MCF 10A (cell line): ENCODE measurements at regions of chr6 and their contacts with region 1.

Region 1: GRCh38 chr6:101393251-101393828 is at the start of gene GRIK2:
- DNase-seq: peak; percentile 59
- H3K4me3 Mint-ChIP-seq: peak within 1 kb of the TSS; percentile 82
- H3K27ac Mint-ChIP-seq: no peak within 1 kb of the TSS
- H3K4me1 Mint-ChIP-seq: peaks cover 13% of the 10 kb centered on the region
- H3K27me3 Mint-ChIP-seq: no peaks in the 10 kb centered on the region
- CTCF ChIP-seq: peak; percentile 49
- total RNA-seq, gene GRIK2: 0.89 and 2.5 TPM in 2 replicates

Region 2: DNA sequence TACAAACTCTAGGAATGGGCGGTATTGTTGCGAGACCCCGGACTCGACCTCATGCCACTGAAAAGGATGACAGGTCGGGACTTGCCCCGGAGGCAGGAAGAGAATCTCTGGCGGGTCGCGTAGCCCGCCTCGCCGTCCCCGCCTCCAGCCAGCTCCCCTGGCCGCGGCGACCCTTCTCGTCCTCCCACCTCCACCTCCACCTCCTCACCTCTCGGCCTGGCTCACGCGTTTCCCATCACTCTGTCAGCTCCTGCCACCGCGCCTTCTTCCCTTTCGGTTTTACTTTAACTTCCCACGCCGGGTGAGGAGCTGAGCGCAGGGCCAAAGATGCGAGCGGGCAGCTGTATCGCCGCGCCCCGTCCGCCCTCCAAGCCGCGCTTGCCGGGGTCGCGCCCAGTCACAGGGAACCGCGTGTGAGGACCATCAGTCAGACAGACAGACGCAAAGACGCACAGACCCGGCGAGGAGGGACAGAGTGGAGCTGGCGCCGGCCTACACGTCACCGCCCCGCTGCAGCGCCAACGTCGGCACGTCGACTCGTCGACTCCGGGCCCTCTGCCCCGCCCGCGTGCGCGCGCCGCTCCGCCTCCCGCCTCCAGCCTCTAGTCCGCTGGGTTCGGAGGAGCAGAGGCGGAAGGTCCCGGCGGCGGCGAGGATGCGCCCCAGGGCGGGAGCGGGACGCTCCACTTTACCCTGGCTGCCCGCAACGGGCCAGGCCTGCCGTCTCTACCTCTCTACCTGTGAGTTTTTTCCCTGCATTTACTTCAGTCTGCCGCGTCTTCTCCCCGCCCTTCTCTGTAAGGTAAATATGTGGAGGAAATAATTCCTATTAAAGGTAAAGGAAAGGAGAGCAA is 512.3 kb before region 1 on chr6 and contains the start of gene ASCC3:
- CTCF ChIA-PET with region 1: no interaction called
- POLR2A ChIA-PET with region 1: no interaction called
- intact Hi-C with region 1: loop called (anchors 10 kb)
- DNase-seq: peak; percentile 92
- H3K4me3 Mint-ChIP-seq: peak within 1 kb of the TSS; percentile 100
- H3K27ac Mint-ChIP-seq: peak within 1 kb of the TSS; percentile 99
- H3K4me1 Mint-ChIP-seq: peaks cover 36% of the 10 kb centered on the region
- H3K27me3 Mint-ChIP-seq: no peaks in the 10 kb centered on the region
- CTCF ChIP-seq: no peak
- total RNA-seq, gene ASCC3: 64.9 and 85.0 TPM in 2 replicates

Region 3: DNA sequence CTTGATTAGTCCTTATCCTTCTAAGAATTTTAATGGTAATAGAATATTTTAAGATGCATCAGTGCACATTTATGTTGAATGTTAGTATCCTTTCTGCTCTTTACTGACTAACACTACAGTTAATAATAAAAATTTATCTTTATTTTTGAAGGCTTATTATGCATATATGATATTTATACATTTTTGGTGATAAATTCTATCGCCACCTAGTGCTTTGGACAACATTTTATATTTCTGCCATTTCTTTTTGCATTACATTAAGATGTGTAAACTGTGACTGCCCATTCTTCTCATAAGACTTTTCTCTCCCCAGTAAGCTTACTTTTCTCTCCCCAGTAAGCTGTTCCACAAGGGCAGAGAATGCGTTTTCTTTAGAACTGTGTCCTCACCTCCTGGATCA is 252.4 kb after region 1 on chr6:
- CTCF ChIA-PET with region 1: interaction called, 3 read pairs
- POLR2A ChIA-PET with region 1: no interaction called
- intact Hi-C with region 1: loop called (anchors 5 kb)
- DNase-seq: no peak
- H3K4me3 Mint-ChIP-seq: no peak overlapping the region
- H3K27ac Mint-ChIP-seq: no peak overlapping the region
- H3K4me1 Mint-ChIP-seq: no peaks in the 10 kb centered on the region
- H3K27me3 Mint-ChIP-seq: no peaks in the 10 kb centered on the region
- CTCF ChIP-seq: no peak

Region 4: GRCh38 chr6:102619585-102619984 is 1226.2 kb after region 1 on chr6:
- CTCF ChIA-PET with region 1: no interaction called
- POLR2A ChIA-PET with region 1: no interaction called
- intact Hi-C with region 1: loop called (anchors 1 kb)
- DNase-seq: peak; percentile 53
- H3K4me3 Mint-ChIP-seq: no peak overlapping the region
- H3K27ac Mint-ChIP-seq: no peak overlapping the region
- H3K4me1 Mint-ChIP-seq: no peaks in the 10 kb centered on the region
- H3K27me3 Mint-ChIP-seq: no peaks in the 10 kb centered on the region
- CTCF ChIP-seq: peak; percentile 43

Region 5: GRCh38 chr6:103273048-103273447 is 1879.7 kb after region 1 on chr6:
- CTCF ChIA-PET with region 1: no interaction called
- POLR2A ChIA-PET with region 1: no interaction called
- intact Hi-C with region 1: loop called (anchors 10 kb)
- DNase-seq: peak; percentile 54
- H3K4me3 Mint-ChIP-seq: no peak overlapping the region
- H3K27ac Mint-ChIP-seq: no peak overlapping the region
- H3K4me1 Mint-ChIP-seq: no peaks in the 10 kb centered on the region
- H3K27me3 Mint-ChIP-seq: no peaks in the 10 kb centered on the region
- CTCF ChIP-seq: peak; percentile 49